MCF 10A (cell line): ENCODE measurements at regions of chr10 and their contacts with region 1.

Region 1: DNA sequence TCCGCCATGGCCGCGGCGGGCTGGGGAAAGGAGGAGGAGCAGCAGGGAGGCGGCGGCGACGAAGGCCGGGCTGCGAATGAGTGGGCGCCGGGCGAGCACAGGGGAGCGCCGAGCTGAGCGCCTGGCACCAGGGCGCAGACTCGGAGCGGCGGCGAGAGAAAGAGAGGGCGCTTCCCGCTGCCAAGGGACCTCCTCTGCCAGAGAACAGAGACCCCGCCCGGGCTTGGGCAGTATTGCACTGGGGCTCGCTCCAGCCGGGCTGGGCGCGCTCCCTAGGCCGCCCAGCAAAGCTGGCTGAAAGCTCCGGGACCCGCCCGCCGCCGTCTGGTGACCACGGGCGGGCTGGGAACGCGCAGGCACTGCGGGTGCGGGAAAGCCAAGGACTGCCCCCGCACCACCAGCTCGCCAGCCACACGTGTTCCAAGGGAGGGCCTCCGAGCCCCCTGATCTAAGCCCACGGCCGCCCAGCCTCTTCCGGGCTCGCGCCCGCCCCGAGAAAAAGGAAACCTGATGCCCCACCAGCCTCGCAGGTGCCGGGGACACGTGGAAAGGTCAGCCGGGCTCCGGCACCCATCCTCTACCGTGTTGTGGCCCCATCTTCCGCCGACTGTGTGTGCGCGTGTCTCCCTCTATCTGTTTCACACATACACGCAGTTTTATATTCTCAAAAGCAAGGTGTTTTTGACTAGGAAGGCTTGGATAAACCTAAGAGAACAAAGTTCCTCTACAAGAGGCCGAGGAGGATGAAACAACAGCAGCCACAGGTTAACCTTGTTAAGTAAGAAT is at the start of gene CCDC6:
- DNase-seq: peak; percentile 92
- H3K4me3 Mint-ChIP-seq: peak within 1 kb of the TSS; percentile 87
- H3K27ac Mint-ChIP-seq: peak within 1 kb of the TSS; percentile 86
- H3K4me1 Mint-ChIP-seq: peaks cover 47% of the 10 kb centered on the region
- H3K27me3 Mint-ChIP-seq: no peaks in the 10 kb centered on the region
- CTCF ChIP-seq: peak; percentile 50
- total RNA-seq, gene CCDC6: 56.6 and 66.4 TPM in 2 replicates

Region 2: GRCh38 chr10:59688921-59689351 is 217.7 kb before region 1 on chr10:
- CTCF ChIA-PET with region 1: no interaction called
- POLR2A ChIA-PET with region 1: no interaction called
- intact Hi-C with region 1: no loop called
- DNase-seq: no peak
- H3K4me3 Mint-ChIP-seq: no peak overlapping the region
- H3K27ac Mint-ChIP-seq: no peak overlapping the region
- H3K4me1 Mint-ChIP-seq: peaks cover 6% of the 10 kb centered on the region
- H3K27me3 Mint-ChIP-seq: no peaks in the 10 kb centered on the region
- CTCF ChIP-seq: no peak

Region 3: DNA sequence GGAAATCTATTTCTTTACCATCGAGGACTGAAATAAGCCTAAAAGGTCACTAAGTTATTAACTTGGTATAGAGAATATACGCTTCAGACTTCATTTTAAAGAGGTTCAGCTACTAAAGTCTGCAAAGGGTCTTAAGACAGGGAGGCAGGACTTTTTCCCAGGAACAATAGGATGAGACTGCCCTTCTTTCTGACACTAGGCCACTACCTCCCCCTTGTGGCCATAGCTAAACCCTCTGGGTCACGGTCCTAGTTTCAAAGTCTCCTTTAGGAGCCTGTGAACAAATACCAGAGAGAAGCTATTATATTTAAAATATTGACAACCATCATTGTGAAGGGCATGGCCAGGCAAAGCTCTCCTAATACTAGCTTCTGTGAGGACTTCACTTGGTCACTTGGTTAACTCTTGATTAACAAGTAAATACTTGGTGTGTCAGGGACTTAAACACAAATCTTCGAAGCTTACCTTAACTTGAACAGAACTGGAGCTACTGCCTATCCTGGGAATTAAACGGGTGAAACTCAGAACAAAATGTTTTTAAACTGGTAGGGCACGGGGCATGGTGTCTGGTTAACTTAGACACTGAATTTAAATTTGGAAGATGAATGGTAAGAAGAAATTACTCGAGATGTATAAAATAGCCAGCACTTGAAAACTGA is 75.9 kb before region 1 on chr10:
- CTCF ChIA-PET with region 1: interaction called, 17 read pairs
- POLR2A ChIA-PET with region 1: interaction called, 6 read pairs
- intact Hi-C with region 1: loop called (anchors 1 kb)
- DNase-seq: peak; percentile 65
- H3K4me3 Mint-ChIP-seq: no peak overlapping the region
- H3K27ac Mint-ChIP-seq: no peak overlapping the region
- H3K4me1 Mint-ChIP-seq: no peaks in the 10 kb centered on the region
- H3K27me3 Mint-ChIP-seq: no peaks in the 10 kb centered on the region
- CTCF ChIP-seq: peak; percentile 70

Region 4: DNA sequence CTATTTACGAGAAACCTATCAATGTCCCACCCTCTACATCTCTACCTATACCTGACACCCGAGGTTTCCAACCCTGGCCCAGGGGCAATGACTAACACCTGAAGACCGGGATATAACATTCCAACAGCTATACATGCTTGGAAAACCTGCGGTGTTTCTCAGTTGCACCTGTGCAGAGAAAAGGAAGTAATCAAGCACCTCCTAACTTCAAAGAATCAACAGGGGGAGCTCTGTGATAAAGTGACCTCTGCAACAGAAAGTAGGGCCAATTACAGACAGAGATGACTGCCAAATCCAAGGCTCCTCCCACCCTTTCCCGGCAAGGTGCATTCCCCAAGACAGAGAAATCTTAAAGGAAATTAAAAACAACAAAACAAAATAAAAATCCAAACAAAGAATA is 41.5 kb before region 1 on chr10:
- CTCF ChIA-PET with region 1: interaction called, 127 read pairs
- POLR2A ChIA-PET with region 1: interaction called, 130 read pairs
- intact Hi-C with region 1: loop called (anchors 1 kb)
- DNase-seq: peak; percentile 75
- H3K4me3 Mint-ChIP-seq: no peak overlapping the region
- H3K27ac Mint-ChIP-seq: no peak overlapping the region
- H3K4me1 Mint-ChIP-seq: peaks cover 42% of the 10 kb centered on the region
- H3K27me3 Mint-ChIP-seq: no peaks in the 10 kb centered on the region
- CTCF ChIP-seq: peak; percentile 40

Region 5: GRCh38 chr10:59894114-59894513 is 12.5 kb before region 1 on chr10:
- CTCF ChIA-PET with region 1: interaction called, 41 read pairs
- POLR2A ChIA-PET with region 1: interaction called, 13 read pairs
- intact Hi-C with region 1: no loop called
- DNase-seq: peak; percentile 66
- H3K4me3 Mint-ChIP-seq: no peak overlapping the region
- H3K27ac Mint-ChIP-seq: peak overlapping the region; percentile 78
- H3K4me1 Mint-ChIP-seq: peaks cover 47% of the 10 kb centered on the region
- H3K27me3 Mint-ChIP-seq: no peaks in the 10 kb centered on the region
- CTCF ChIP-seq: no peak

Region 6: DNA sequence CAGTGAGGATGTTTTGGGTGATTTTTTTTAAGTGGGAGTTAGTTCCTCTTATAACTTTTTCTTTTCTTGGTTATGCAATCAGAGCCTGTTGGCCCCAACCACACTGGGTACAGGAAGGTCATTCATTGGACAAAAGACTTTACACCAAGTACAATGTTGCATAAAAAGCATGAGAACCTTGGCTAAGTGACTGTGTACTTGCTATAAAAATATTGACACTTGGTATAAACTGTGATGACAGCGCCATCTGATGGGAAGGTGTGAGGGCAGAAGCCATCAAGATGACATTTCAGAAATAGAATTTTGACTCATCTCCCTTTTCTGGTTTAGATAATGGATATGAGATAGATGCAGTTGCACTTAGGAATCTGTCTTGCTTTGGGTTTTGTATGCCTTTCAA is 126.1 kb after region 1 on chr10:
- CTCF ChIA-PET with region 1: interaction called, 9 read pairs
- POLR2A ChIA-PET with region 1: interaction called, 4 read pairs
- intact Hi-C with region 1: loop called (anchors 1 kb)
- DNase-seq: peak; percentile 77
- H3K4me3 Mint-ChIP-seq: no peak overlapping the region
- H3K27ac Mint-ChIP-seq: no peak overlapping the region
- H3K4me1 Mint-ChIP-seq: no peaks in the 10 kb centered on the region
- H3K27me3 Mint-ChIP-seq: no peaks in the 10 kb centered on the region
- CTCF ChIP-seq: peak; percentile 58

Region 7: GRCh38 chr10:60414805-60415585 is 508.4 kb after region 1 on chr10:
- CTCF ChIA-PET with region 1: no interaction called
- POLR2A ChIA-PET with region 1: no interaction called
- intact Hi-C with region 1: no loop called
- DNase-seq: peak; percentile 68
- H3K4me3 Mint-ChIP-seq: peak overlapping the region; percentile 7
- H3K27ac Mint-ChIP-seq: peak overlapping the region; percentile 22
- H3K4me1 Mint-ChIP-seq: peaks cover 37% of the 10 kb centered on the region
- H3K27me3 Mint-ChIP-seq: no peaks in the 10 kb centered on the region
- CTCF ChIP-seq: no peak